ENCODE measurements at regions of chr1 and their contacts with region 1.

Region 1: DNA sequence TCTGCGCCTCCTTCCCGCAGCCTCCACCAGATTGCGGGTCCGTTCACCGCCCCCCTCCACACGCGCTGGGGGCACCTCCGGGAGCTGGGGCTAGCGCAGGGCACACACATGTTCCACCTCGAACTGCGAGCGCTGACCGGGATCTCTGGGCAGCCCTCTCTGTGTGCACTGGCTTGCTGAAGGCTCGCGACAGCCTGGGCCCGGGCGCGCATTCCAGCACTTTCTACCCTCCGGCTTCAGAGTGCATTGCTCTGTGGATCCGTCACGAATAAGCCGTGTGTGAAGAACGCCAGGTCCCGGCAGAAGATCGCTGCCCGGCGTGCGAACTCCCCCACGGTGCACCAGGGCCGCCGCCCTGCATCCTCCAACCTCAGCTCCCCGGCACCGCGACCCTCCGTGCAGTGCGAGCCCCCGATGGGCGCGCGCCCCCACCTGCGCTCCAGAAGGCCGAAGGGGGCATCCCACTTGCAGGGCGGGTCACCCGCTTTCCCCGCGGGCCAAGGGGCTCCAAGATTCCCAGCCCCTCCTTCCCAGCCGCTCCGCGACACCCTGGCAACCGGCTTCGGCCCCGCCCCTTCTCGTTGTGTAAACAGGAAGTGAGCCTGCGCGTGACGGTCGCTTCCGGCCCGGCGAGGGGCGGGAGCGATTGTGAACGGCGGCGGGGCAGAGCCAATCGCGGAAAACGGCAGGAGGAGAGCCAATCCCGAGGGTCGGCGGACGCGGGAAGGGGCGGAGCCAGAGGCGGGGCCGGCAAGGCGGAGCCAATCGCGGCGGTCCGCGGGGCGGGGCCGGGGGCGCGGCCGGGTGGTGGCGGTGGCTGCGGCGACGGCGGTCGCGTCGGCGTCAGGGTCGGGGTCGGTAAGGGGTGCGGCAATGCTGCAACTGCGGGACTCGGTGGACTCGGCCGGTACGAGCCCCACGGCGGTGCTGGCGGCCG is at the start of gene TPRG1L:
- ATAC-seq: peak; percentile 78 to 96 (median 86)
- H3K4me3 ChIP-seq: peak within 1 kb of the TSS; percentile 80 to 94 (median 88)
- H3K27ac ChIP-seq: peak within 1 kb of the TSS; percentile 60 to 91
- H3K4me1 ChIP-seq: peaks cover 21 to 28% of the 10 kb centered on the region in 2 donors
- total RNA-seq, gene TPRG1L: 12.6 to 36.3 (median 25.7) TPM

Region 2: GRCh38 chr1:3453203-3453761 is 171.2 kb before region 1 on chr1:
- in situ Hi-C with region 1: loop called in 1 of 9 experiments (anchors 10 kb)
- ATAC-seq: peak; percentile 53 to 78 (median 65)
- H3K4me3 ChIP-seq: no peak overlapping the region
- H3K27ac ChIP-seq: no peak overlapping the region
- H3K4me1 ChIP-seq: peaks cover 8 to 20% of the 10 kb centered on the region in 2 donors

Region 3: DNA sequence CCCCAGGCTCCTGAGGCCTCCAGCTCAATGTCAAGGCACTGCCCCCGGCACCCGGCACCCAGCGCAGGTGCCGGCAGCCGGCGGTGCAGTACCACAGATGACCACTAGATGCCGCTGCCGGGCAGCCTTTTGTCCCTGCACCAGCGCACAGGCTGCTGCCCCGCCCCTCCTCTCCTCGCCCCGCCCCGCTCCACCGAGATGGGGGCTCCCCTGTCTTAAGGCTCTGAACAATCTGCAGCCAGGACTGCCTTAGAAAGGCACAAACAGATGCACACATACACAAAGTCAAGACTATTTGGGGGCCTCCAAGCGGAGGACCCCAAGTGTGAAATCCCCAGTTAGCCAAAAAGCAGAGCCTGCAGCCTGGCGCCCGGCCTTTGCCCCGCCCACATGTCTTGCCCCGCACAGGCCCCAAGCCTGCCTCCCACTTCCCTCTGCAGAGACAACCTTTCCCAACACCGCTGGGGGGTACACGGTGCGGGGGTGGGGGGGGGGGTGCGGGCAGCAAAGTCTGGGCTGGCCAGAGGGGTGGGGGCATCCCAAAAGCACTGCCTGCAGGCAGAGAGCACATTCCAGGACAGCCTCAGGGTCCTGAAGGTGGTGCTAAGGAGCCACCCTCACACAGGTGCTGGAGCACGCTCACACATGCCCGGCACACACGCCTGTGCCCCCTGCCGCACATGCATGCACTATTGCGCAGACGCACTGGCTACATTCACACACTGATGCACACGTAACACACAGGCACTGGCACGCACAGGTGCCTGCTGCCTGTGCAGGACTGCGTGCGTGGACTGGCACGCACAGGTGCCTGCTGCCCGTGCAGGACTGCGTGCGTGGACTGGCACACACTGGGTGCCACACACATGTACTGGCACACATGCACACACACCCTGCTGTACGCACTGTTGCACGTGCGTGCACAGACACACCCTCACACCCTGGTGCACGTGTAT is 132.9 kb before region 1 on chr1:
- in situ Hi-C with region 1: loop called in 1 of 9 experiments (anchors 5 kb)
- ATAC-seq: peak; percentile 72 to 97 (median 80)
- H3K4me3 ChIP-seq: no peak overlapping the region
- H3K27ac ChIP-seq: no peak overlapping the region
- H3K4me1 ChIP-seq: peaks cover 6 to 10% of the 10 kb centered on the region in 2 donors